Activated T-helper 2 cell treated with anti-CD3 and anti-CD28 coated beads, Interferon-gamma antibody, Interleukin-2, Interleukin-4, amounts not matched to agents 10 μg/mL and 5 μg/mL and 100 μg/mL, durations not matched to agents 14 hours and 24 hours and 36 hours (primary cell): ENCODE measurements at regions of chr11 and their contacts with region 1.

Region 1: DNA sequence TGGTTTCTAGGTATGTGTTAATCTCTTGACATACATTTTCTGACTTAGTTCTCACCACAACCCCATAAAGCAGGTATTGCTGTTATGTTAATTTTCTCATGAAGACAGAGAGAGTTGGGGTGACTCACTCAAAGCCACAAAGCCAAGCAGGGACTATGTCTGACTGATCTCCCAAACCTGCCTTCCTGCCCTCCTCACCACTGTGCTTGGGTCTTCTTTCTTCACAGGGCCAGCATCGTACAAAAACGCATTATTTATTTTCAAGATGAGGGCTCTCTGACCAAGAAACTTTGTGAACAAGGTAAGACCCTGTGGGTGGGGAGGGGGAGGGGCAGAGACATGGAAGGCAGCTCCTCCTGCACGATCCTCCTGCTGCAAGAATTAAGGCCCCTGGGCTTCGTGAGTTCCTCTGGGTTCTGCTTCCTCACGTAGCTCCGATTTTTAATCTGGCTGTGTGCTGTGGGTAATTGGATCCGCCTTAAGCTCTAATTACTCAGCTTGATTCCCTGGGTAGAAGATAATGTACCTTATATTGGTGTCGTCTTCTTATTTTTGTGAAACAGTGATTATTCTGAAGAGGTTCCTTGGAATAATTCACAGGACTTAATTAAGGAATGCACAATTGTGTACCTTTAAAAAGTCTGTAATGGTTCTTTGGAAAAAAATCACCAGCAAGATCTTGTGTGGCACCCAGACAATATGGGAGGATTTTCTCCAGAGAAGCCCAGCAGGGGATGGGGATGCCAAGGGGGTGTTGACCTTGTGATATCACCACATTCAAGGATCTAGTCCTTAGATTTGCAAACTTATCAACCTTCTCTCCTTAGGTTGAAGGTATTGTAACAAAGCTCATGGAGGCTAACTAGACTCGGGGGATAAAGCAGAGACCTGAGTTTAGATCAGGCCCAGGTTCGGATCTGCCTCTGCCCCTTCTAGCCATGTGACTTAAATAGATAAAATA is 112.9 kb downstream of the SPON1 start:
- DNase-seq: peak; percentile 57
- H3K4me3 Mint-ChIP-seq: no peak overlapping the region
- H3K27ac Mint-ChIP-seq: no peak overlapping the region
- H3K4me1 Mint-ChIP-seq: peaks cover 43% of the 10 kb centered on the region
- H3K27me3 Mint-ChIP-seq: peaks cover 20% of the 10 kb centered on the region

Region 2: GRCh38 chr11:13850231-13851005 is 225.0 kb before region 1 on chr11:
- intact Hi-C with region 1: no loop called
- DNase-seq: no peak
- H3K4me3 Mint-ChIP-seq: no peak overlapping the region
- H3K27ac Mint-ChIP-seq: no peak overlapping the region
- H3K4me1 Mint-ChIP-seq: no peaks in the 10 kb centered on the region
- H3K27me3 Mint-ChIP-seq: peaks cover 29% of the 10 kb centered on the region

Region 3: GRCh38 chr11:13970986-13971385 is 104.4 kb before region 1 on chr11:
- intact Hi-C with region 1: loop called (anchors 5 kb)
- DNase-seq: no peak
- H3K4me3 Mint-ChIP-seq: no peak overlapping the region
- H3K27ac Mint-ChIP-seq: no peak overlapping the region
- H3K4me1 Mint-ChIP-seq: peaks cover 23% of the 10 kb centered on the region
- H3K27me3 Mint-ChIP-seq: peaks cover 25% of the 10 kb centered on the region